ENCODE measurements at regions of chr15 and their contacts with region 1.

Region 1: DNA sequence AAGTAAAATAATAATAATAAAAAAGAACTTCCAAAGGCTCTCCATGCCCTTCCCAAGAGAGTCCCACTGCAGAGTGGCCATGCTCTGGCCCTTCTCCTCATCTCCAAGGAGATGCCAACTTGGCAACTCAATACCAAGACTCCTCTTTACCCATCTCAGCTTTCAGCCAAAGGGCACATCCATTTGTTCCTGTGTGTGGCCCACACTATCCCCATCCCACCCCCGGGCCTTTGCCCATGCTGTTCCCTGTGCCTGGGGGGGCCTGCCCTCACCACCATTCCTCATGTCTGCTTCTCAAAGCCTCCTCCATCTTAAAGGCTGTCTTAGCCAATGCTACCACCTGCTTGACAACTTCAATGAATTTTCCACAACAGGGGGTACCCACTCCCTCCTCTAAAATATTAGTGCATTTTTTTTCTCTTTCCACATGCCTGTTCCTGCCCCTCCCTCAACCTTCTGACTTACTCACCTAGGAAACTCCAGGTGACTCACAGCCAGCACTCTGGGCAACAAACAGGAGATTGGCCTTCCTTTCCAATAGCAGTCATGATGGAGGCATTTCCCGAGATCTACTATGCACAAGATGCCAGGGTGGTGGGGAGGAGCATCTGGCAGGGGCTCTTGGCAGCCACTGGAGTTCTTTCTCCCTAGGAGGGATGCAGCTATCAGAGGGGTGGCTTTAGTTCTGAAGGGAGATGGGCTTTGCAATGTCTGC is 109.4 kb upstream of the SMAD3 start:
- ATAC-seq: no peak
- H3K4me3 ChIP-seq: no peak overlapping the region
- H3K27ac ChIP-seq: no peak overlapping the region
- H3K4me1 ChIP-seq: peaks cover 8% of the 10 kb centered on the region in 2 donors

Region 2: DNA sequence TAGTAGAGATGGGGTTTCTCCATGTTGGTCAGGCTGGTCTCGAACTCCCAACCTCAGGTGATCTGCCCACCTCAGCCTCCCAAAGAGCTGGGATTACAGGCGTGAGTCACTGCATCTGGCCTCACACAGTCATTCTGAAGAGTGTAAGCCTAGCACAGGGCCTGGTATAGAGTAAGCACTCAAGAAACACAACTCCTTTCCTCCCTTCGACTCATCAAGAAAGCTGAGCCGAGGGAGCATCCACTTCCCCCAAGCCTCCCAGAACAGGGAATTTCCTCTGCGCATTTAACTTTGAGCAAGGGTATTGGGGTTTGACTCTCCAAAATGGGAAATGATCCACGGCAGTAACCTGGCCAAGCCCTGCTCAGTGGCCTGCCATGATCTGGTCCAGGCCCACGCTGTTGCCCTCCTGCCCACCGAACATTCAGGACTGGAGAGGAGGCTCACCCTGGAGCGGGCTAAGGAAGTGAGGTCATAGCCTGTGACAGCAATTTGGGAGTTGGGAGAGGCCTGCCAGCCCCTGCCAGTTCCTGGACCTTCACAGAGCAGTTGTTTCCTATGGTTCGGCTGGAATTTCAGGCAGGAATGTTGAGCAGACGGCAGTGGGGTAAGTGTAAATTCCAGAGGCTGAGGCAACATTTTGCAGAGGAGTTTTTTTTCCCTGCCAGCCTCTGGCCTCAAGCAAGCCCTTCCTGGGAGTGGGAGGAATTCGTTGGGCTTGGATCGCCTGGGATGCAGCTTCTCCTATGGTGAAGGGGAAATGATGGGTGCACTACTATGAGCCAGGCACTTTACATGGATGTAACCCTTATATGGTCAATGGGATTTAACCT is 88.1 kb after region 1 on chr15:
- in situ Hi-C with region 1: no loop called
- ATAC-seq: peak in 3 of 8 experiments; percentile 8 to 53 (median 15)
- H3K4me3 ChIP-seq: no peak overlapping the region
- H3K27ac ChIP-seq: no peak overlapping the region
- H3K4me1 ChIP-seq: peaks cover 11 to 23% of the 10 kb centered on the region in 2 donors

Region 3: DNA sequence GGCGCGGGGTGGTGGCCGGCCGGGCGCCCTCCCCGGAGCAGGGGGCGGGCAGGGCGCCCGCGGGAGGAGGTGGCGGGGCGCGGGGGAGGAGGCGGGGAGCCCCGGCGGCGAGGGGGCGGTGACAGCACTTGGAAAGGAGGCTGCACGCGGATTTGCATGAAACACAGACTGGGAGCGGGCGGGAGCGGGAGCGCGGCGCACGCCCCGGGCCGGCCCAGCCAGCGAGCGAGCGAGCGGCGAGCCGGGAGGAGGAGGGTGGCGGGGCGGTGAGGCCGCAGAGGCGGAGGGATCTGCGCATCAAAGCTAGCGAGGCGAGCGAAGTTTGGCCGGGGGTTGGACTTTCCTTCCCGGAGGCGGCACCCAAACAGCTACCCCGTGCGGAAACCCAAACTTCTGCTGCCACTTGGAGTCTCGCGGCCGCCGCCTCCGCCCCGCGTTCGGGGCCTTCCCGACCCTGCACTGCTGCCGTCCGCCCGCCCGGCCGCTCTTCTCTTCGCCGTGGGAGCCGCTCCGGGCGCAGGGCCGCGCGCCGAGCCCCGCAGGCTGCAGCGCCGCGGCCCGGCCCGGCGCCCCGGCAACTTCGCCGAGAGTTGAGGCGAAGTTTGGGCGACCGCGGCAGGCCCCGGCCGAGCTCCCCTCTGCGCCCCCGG is 109.5 kb after region 1 on chr15 and contains the start of gene SMAD3:
- in situ Hi-C with region 1: loop called in 1 of 9 experiments (anchors 10 kb)
- ATAC-seq: peak; percentile 78 to 88 (median 80)
- H3K4me3 ChIP-seq: peak within 1 kb of the TSS; percentile 46 to 70 (median 49)
- H3K27ac ChIP-seq: peak within 1 kb of the TSS; percentile 7 to 75
- H3K4me1 ChIP-seq: peaks cover 18 to 26% of the 10 kb centered on the region in 2 donors
- total RNA-seq, gene SMAD3: 4.4 to 57.9 (median 13.9) TPM

Region 4: DNA sequence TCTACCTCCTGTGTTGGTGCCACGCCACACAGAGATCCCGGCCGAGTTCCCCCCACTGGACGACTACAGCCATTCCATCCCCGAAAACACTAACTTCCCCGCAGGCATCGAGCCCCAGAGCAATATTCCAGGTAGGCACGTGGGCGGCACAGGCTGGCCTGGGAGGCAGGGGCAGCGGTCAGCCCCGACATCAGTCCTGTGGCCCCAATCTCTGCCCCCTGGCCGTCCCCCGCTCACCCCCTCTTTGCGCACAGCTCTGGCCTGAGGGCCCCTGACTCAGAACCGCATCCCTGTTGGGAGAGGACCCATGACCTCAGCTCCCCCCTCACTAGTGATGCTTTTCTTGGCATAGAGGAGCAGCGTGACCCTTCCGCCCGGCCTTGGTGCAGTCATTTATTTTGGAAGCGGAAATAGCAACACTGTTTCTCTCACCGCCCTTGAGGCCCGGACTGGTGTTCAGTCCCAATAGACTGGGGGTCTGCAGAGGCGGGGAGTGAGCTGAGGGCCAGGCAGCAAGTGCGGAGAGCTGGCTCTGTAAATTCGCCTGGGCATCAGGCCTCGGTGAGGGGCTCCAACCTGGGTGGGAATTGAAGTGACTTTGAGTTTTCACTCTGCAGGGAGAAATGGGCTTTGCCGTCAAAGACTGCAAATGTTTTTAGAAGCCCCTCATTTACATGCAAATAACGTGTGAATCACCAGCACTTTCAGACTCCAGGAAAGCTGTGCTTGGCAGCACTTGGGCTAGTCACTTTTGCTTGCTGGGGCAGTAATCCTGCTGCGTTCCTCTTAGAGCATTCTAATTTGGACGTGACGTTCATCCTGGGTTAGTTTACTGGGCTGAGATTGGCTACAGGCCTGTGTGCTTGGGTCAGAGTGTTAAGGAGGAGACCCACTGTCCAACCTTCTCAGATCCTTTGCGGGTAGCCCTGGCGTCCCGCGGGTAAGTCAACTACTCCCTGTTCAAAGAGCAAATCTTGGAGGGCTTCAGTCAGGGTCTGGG is 209.5 kb after region 1 on chr15:
- in situ Hi-C with region 1: no loop called
- ATAC-seq: peak in 5 of 8 experiments; percentile 51 to 79 (median 75)
- H3K4me3 ChIP-seq: no peak overlapping the region
- H3K27ac ChIP-seq: peak overlapping the region in 1 of 2 donors; percentile 1
- H3K4me1 ChIP-seq: peaks cover 3 to 19% of the 10 kb centered on the region in 2 donors